ENCODE measurements at regions of chr16 and their contacts with region 1.

Region 1: GRCh38 chr16:10964039-10964890 is 19.9 kb downstream of the CLEC16A start:
- DNase-seq: peak; percentile 67 to 84 (median 76)
- H3K4me3 ChIP-seq: peak overlapping the region; percentile 37
- H3K4me3 Mint-ChIP-seq: peak overlapping the region in 6 of 7 donors; percentile 59 to 86 (median 66)
- H3K27ac ChIP-seq: no peak overlapping the region
- H3K27ac Mint-ChIP-seq: peak overlapping the region; percentile 13 to 89 (median 78)
- H3K4me1 ChIP-seq: peaks cover 21% of the 10 kb centered on the region
- H3K4me1 Mint-ChIP-seq: peaks cover 16 to 27% (median 24%) of the 10 kb centered on the region in 3 donors
- H3K27me3 ChIP-seq: no peaks in the 10 kb centered on the region
- H3K27me3 Mint-ChIP-seq: no peaks in the 10 kb centered on the region

Region 2: DNA sequence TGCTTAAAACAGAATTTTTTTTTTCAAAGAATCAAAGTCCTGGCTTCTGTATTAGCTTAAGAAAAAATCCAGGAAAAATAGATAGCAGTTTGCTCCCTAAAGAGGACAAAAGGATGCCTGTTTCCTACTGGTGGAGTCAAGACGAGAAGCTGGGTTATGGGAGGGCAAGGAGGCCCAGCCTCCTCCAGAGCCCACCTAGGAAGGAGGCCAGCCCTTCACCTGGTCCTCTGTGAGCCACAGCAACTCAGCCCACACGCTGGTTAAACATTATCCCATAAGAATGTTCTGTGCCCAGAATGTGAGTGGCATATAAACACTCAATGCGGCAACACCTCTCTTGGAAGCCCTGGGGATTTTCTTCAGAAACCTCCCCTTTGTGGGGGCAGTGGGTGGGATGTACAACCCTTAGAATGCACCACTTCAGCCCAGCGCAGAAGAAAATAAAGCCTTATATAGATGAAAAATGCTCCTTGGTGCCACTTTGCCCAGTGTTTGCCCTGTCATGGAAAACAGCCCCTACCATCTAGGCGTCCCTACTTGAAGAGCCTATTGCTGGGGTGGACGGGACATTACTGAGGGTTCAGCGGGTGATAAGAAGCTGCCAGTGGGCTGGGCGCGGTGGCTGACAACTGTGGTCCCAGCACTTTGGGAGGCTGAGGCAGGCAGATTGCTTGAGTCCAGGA is 317.5 kb before region 1 on chr16:
- CTCF ChIA-PET with region 1: no interaction called
- POLR2A ChIA-PET with region 1: no interaction called
- DNase-seq: no peak
- H3K4me3 ChIP-seq: no peak overlapping the region
- H3K4me3 Mint-ChIP-seq: no peak overlapping the region
- H3K27ac ChIP-seq: no peak overlapping the region
- H3K27ac Mint-ChIP-seq: no peak overlapping the region
- H3K4me1 ChIP-seq: no peaks in the 10 kb centered on the region
- H3K4me1 Mint-ChIP-seq: no peaks in the 10 kb centered on the region
- H3K27me3 ChIP-seq: no peaks in the 10 kb centered on the region
- H3K27me3 Mint-ChIP-seq: peaks cover 3 to 11% of the 10 kb centered on the region in 2 donors

Region 3: GRCh38 chr16:10944249-10945064 is 19.8 kb before region 1 on chr16 and contains the start of gene CLEC16A:
- CTCF ChIA-PET with region 1: interaction called, 18 read pairs
- POLR2A ChIA-PET with region 1: no interaction called
- DNase-seq: peak; percentile 90 to 96 (median 95)
- H3K4me3 ChIP-seq: peak within 1 kb of the TSS; percentile 75
- H3K4me3 Mint-ChIP-seq: peak within 1 kb of the TSS; percentile 82 to 94 (median 87)
- H3K27ac ChIP-seq: peak within 1 kb of the TSS; percentile 40
- H3K27ac Mint-ChIP-seq: peak within 1 kb of the TSS; percentile 46 to 93 (median 80)
- H3K4me1 ChIP-seq: peaks cover 65% of the 10 kb centered on the region
- H3K4me1 Mint-ChIP-seq: peaks cover 59 to 86% (median 70%) of the 10 kb centered on the region in 3 donors
- H3K27me3 ChIP-seq: no peaks in the 10 kb centered on the region
- H3K27me3 Mint-ChIP-seq: no peaks in the 10 kb centered on the region
- total RNA-seq, gene CLEC16A: 38.1 to 38.2 TPM

Region 4: DNA sequence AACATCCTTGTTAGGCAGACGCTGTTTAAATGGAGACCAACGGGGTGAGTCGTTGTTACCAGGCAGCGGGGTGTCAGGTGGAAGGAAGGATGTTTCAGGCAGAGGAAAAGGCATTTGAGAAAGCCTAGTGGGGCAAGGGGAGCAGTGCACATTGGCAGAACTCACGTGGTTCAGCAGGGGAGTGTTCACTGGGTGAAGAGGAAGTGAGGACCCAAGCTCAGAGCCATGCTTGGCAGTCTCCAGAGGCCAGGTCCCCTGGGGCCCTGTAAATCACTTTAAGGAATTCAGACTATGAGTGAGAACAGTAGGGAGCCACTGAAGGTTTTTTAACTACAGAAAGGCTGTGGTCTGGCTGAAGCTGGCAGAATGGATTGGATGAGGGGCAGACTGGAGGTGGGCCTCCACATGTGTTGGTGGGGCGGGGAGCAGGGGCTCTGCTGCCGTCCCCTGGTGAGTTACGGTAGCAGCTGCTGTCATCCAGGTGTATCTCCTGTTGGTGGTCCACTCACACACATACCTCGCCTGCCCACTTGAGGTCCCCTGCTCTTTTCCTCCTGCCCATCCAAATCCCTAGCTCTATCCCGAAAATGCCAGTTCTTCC is 14.8 kb before region 1 on chr16:
- CTCF ChIA-PET with region 1: interaction called, 39 read pairs
- POLR2A ChIA-PET with region 1: no interaction called
- DNase-seq: peak in 1 of 5 donors; percentile 47
- H3K4me3 ChIP-seq: no peak overlapping the region
- H3K4me3 Mint-ChIP-seq: peak overlapping the region in 2 of 7 donors; percentile 51 to 77
- H3K27ac ChIP-seq: no peak overlapping the region
- H3K27ac Mint-ChIP-seq: peak overlapping the region in 5 of 8 donors; percentile 13 to 88 (median 39)
- H3K4me1 ChIP-seq: peaks cover 39% of the 10 kb centered on the region
- H3K4me1 Mint-ChIP-seq: peaks cover 39 to 68% (median 56%) of the 10 kb centered on the region in 3 donors
- H3K27me3 ChIP-seq: no peaks in the 10 kb centered on the region
- H3K27me3 Mint-ChIP-seq: no peaks in the 10 kb centered on the region

Region 5: DNA sequence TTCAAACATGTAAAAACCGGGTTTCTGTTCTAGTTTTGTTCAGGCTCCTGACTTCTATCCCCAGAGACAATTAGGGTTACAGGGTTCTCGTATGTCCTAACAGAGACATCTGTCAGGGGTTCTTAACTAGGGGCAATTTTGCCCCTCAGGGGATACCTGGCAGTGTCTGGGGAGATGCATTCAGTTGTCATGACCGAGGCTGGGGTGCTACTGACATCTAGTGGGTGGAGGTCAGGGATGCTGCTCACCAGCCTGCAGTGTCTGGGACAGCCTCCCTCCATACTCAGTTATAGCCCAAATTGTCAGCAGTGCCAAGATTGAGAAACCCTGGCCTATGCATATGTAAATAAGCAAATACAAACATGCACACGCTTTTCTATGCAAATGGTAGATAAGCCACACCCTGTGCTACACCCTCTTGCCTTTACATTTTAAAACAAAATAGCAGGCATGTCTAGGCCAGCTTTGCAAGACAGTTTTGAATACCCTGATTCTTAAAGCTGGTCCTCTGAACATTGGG is 17.5 kb after region 1 on chr16:
- CTCF ChIA-PET with region 1: interaction called, 10 read pairs
- POLR2A ChIA-PET with region 1: no interaction called
- DNase-seq: no peak
- H3K4me3 ChIP-seq: no peak overlapping the region
- H3K4me3 Mint-ChIP-seq: no peak overlapping the region
- H3K27ac ChIP-seq: no peak overlapping the region
- H3K27ac Mint-ChIP-seq: no peak overlapping the region
- H3K4me1 ChIP-seq: no peaks in the 10 kb centered on the region
- H3K4me1 Mint-ChIP-seq: peaks cover 0 to 6% (median 6%) of the 10 kb centered on the region in 3 donors
- H3K27me3 ChIP-seq: no peaks in the 10 kb centered on the region
- H3K27me3 Mint-ChIP-seq: no peaks in the 10 kb centered on the region

Region 6: DNA sequence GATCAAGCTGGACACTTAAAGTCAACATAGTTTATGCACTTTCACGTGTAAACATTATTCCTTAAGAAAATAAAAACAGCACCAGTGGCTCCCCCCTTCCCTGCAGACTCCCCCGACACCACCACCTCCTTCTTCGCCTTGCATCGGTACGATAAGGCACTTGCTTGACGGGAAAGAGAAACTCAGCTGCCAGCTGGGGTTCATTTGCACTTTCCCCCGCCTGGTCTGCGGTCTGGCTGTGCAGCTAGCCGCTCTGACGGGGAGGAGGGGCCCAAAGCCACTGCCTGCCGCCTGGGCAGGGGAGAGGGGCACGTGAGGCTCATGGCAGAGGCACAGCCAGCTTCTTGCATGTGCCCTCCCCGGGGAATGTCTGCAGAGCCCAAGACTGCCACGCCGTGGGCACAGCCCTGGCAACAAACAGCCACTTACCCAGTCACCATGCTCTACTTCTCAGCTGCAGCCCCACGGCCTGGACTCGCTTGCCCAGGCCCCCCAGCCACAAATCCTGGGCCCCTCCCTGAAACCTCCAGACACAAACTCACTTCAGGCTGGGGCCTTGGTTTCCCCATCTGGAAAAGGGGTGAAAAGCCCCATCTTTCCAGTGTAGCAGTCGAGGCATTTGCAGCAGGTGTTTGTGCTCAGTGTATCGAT is 333.4 kb after region 1 on chr16:
- CTCF ChIA-PET with region 1: interaction called, 17 read pairs
- POLR2A ChIA-PET with region 1: no interaction called
- DNase-seq: peak; percentile 46 to 80 (median 69)
- H3K4me3 ChIP-seq: peak overlapping the region; percentile 15
- H3K4me3 Mint-ChIP-seq: peak overlapping the region in 6 of 7 donors; percentile 65 to 86 (median 72)
- H3K27ac ChIP-seq: peak overlapping the region; percentile 6
- H3K27ac Mint-ChIP-seq: peak overlapping the region in 5 of 8 donors; percentile 37 to 87 (median 42)
- H3K4me1 ChIP-seq: peaks cover 22% of the 10 kb centered on the region
- H3K4me1 Mint-ChIP-seq: peaks cover 12 to 24% (median 20%) of the 10 kb centered on the region in 3 donors
- H3K27me3 ChIP-seq: no peaks in the 10 kb centered on the region
- H3K27me3 Mint-ChIP-seq: peaks cover 7 to 13% of the 10 kb centered on the region in 2 donors

Region 7: GRCh38 chr16:11356573-11357331 is 392.5 kb after region 1 on chr16:
- CTCF ChIA-PET with region 1: interaction called, 11 read pairs
- POLR2A ChIA-PET with region 1: no interaction called
- DNase-seq: peak; percentile 25 to 65 (median 38)
- H3K4me3 ChIP-seq: no peak overlapping the region
- H3K4me3 Mint-ChIP-seq: no peak overlapping the region
- H3K27ac ChIP-seq: no peak overlapping the region
- H3K27ac Mint-ChIP-seq: peak overlapping the region in 1 of 8 donors; percentile 24
- H3K4me1 ChIP-seq: peaks cover 54% of the 10 kb centered on the region
- H3K4me1 Mint-ChIP-seq: peaks cover 46 to 51% (median 50%) of the 10 kb centered on the region in 3 donors
- H3K27me3 ChIP-seq: peaks cover 9% of the 10 kb centered on the region
- H3K27me3 Mint-ChIP-seq: peaks cover 32 to 50% of the 10 kb centered on the region in 2 donors

Region 8: GRCh38 chr16:11370084-11370931 is 406.0 kb after region 1 on chr16:
- CTCF ChIA-PET with region 1: interaction called, 18 read pairs
- POLR2A ChIA-PET with region 1: no interaction called
- DNase-seq: no peak
- H3K4me3 ChIP-seq: no peak overlapping the region
- H3K4me3 Mint-ChIP-seq: no peak overlapping the region
- H3K27ac ChIP-seq: no peak overlapping the region
- H3K27ac Mint-ChIP-seq: no peak overlapping the region
- H3K4me1 ChIP-seq: no peaks in the 10 kb centered on the region
- H3K4me1 Mint-ChIP-seq: peaks cover 0 to 3% (median 3%) of the 10 kb centered on the region in 3 donors
- H3K27me3 ChIP-seq: no peaks in the 10 kb centered on the region
- H3K27me3 Mint-ChIP-seq: peaks cover 0 to 2% of the 10 kb centered on the region in 2 donors

Measured in CD8-positive, alpha-beta memory T cell (primary cell).